Activated B cell treated with CpG ODN at 0.5 μM for 24 hours (primary cell): ENCODE measurements at regions of chr12 and their contacts with region 1.

Region 1: GRCh38 chr12:89542912-89543592 is 17.2 kb upstream of the POC1B start:
- DNase-seq: peak; percentile 22
- ATAC-seq: peak; percentile 86
- H3K4me3 Mint-ChIP-seq: no peak overlapping the region
- H3K27ac Mint-ChIP-seq: no peak overlapping the region
- H3K4me1 Mint-ChIP-seq: peaks cover 11% of the 10 kb centered on the region
- H3K27me3 Mint-ChIP-seq: no peaks in the 10 kb centered on the region
- CTCF ChIP-seq: peak; percentile 93

Region 2: GRCh38 chr12:88934163-88934747 is 608.8 kb before region 1 on chr12:
- CTCF ChIA-PET with region 1: no interaction called
- POLR2A ChIA-PET with region 1: no interaction called
- intact Hi-C with region 1: no loop called
- DNase-seq: no peak
- ATAC-seq: no peak
- H3K4me3 Mint-ChIP-seq: no peak overlapping the region
- H3K27ac Mint-ChIP-seq: no peak overlapping the region
- H3K4me1 Mint-ChIP-seq: no peaks in the 10 kb centered on the region
- H3K27me3 Mint-ChIP-seq: no peaks in the 10 kb centered on the region
- CTCF ChIP-seq: no peak

Region 3: GRCh38 chr12:89960011-89960507 is 417.0 kb after region 1 on chr12:
- CTCF ChIA-PET with region 1: no interaction called
- POLR2A ChIA-PET with region 1: no interaction called
- intact Hi-C with region 1: loop called (anchors 5 kb)
- DNase-seq: no peak
- ATAC-seq: peak; percentile 92
- H3K4me3 Mint-ChIP-seq: peak overlapping the region; percentile 74
- H3K27ac Mint-ChIP-seq: peak overlapping the region; percentile 85
- H3K4me1 Mint-ChIP-seq: peaks cover 38% of the 10 kb centered on the region
- H3K27me3 Mint-ChIP-seq: no peaks in the 10 kb centered on the region
- CTCF ChIP-seq: no peak

Region 4: GRCh38 chr12:90102957-90103652 is 560.1 kb after region 1 on chr12:
- CTCF ChIA-PET with region 1: interaction called, 63 read pairs
- POLR2A ChIA-PET with region 1: interaction called, 4 read pairs
- intact Hi-C with region 1: loop called (anchors 1 kb)
- DNase-seq: no peak
- ATAC-seq: peak; percentile 75
- H3K4me3 Mint-ChIP-seq: peak overlapping the region; percentile 66
- H3K27ac Mint-ChIP-seq: peak overlapping the region; percentile 43
- H3K4me1 Mint-ChIP-seq: peaks cover 29% of the 10 kb centered on the region
- H3K27me3 Mint-ChIP-seq: no peaks in the 10 kb centered on the region
- CTCF ChIP-seq: no peak

Region 5: DNA sequence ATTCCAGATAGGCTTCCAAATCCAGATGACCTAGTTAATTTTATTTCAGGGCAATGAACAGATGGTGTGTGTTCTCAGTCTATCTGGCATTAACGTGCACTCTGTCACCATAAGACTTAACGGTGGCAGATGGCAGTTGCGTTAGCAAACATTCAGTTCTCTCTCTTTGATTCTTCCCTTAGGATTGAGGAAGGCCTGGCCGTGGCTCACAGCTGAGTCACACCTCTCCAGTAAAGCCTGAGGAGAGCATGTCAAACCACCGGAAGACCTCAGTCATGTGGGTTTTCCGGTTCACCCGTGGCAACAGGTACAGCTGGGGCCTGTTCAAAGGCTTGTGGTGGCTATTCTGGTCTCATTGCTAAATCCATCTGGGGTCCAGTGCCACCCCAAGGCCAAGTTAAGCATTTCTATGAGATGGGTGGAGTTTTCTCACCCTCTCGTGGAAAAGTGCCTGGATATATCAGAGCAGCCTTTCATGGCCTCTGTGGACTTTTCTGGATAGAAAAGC is 710.7 kb after region 1 on chr12:
- CTCF ChIA-PET with region 1: interaction called, 9 read pairs
- POLR2A ChIA-PET with region 1: no interaction called
- intact Hi-C with region 1: loop called (anchors 1 kb)
- DNase-seq: peak; percentile 40
- ATAC-seq: peak; percentile 94
- H3K4me3 Mint-ChIP-seq: peak overlapping the region; percentile 64
- H3K27ac Mint-ChIP-seq: peak overlapping the region; percentile 87
- H3K4me1 Mint-ChIP-seq: peaks cover 26% of the 10 kb centered on the region
- H3K27me3 Mint-ChIP-seq: no peaks in the 10 kb centered on the region
- CTCF ChIP-seq: no peak

Region 6: GRCh38 chr12:90618586-90618985 is 1075.5 kb after region 1 on chr12:
- CTCF ChIA-PET with region 1: no interaction called
- POLR2A ChIA-PET with region 1: no interaction called
- intact Hi-C with region 1: loop called (anchors 10 kb)
- DNase-seq: no peak
- ATAC-seq: no peak
- H3K4me3 Mint-ChIP-seq: no peak overlapping the region
- H3K27ac Mint-ChIP-seq: no peak overlapping the region
- H3K4me1 Mint-ChIP-seq: no peaks in the 10 kb centered on the region
- H3K27me3 Mint-ChIP-seq: no peaks in the 10 kb centered on the region
- CTCF ChIP-seq: no peak

Region 7: GRCh38 chr12:90854136-90854689 is 1311.2 kb after region 1 on chr12:
- CTCF ChIA-PET with region 1: interaction called, 13 read pairs
- POLR2A ChIA-PET with region 1: no interaction called
- intact Hi-C with region 1: loop called (anchors 1 kb)
- DNase-seq: no peak
- ATAC-seq: no peak
- H3K4me3 Mint-ChIP-seq: no peak overlapping the region
- H3K27ac Mint-ChIP-seq: no peak overlapping the region
- H3K4me1 Mint-ChIP-seq: no peaks in the 10 kb centered on the region
- H3K27me3 Mint-ChIP-seq: no peaks in the 10 kb centered on the region
- CTCF ChIP-seq: peak; percentile 30

Region 8: DNA sequence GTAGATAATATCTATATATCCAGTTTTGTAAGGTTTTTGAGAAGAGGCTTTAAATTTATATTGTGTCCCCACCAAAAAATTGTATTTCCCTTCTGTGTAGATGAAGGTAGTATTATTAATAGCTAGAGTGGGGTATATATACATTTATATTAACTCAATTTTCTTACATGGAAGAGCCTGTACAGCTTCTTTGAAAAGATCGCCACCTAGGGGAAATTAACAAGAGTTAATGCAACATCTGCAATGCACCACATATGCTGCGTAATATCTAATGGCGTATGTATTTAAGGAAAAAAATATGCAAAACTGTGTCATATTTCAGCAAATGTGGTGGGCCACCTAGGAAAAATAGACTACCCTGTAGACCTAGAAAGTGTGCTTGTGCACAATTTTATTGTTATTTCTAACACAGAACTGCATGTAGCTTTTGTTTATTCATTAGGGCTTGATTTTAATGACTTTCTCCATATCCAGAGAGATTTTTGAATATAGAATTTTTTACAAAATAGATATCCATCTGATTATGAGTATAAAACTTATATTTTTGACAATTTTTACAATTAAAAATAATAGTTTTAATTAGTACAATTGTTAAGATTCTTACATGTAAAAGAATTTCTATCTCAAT is 1397.9 kb after region 1 on chr12:
- CTCF ChIA-PET with region 1: interaction called, 8 read pairs
- POLR2A ChIA-PET with region 1: no interaction called
- intact Hi-C with region 1: loop called (anchors 1 kb)
- DNase-seq: no peak
- ATAC-seq: peak; percentile 28
- H3K4me3 Mint-ChIP-seq: no peak overlapping the region
- H3K27ac Mint-ChIP-seq: no peak overlapping the region
- H3K4me1 Mint-ChIP-seq: no peaks in the 10 kb centered on the region
- H3K27me3 Mint-ChIP-seq: peaks cover 12% of the 10 kb centered on the region
- CTCF ChIP-seq: peak; percentile 36